Activated CD4-positive, alpha-beta T cell treated with anti-CD3 and anti-CD28 coated beads, Interleukin-2, amount 10 ng/mL, durations not matched to agents 24 days and 14 days (primary cell): ENCODE measurements at regions of chr2 and their contacts with region 1.

Region 1: GRCh38 chr2:63841254-63842022 is at the start of gene UGP2:
- DNase-seq: peak; percentile 96
- H3K4me3 Mint-ChIP-seq: peak within 1 kb of the TSS; percentile 96
- H3K27ac Mint-ChIP-seq: peak within 1 kb of the TSS; percentile 100
- H3K4me1 Mint-ChIP-seq: peaks cover 48% of the 10 kb centered on the region
- H3K27me3 Mint-ChIP-seq: peaks cover 3% of the 10 kb centered on the region
- total RNA-seq, gene UGP2: 66.3 and 66.5 TPM in 2 replicates

Region 2: GRCh38 chr2:63588385-63589147 is 252.9 kb before region 1 on chr2 and contains the starts of genes MDH1 and WDPCP:
- intact Hi-C with region 1: loop called (anchors 1 kb)
- DNase-seq: peak; percentile 97
- H3K4me3 Mint-ChIP-seq: peak within 1 kb of the TSS; percentile 98
- H3K27ac Mint-ChIP-seq: peak within 1 kb of the TSS; percentile 92
- H3K4me1 Mint-ChIP-seq: peaks cover 32% of the 10 kb centered on the region
- H3K27me3 Mint-ChIP-seq: no peaks in the 10 kb centered on the region
- total RNA-seq, gene MDH1: 195 and 208 TPM in 2 replicates
- total RNA-seq, gene WDPCP: 6.0 and 8.9 TPM in 2 replicates

Region 3: GRCh38 chr2:63819765-63820717 is 21.4 kb before region 1 on chr2:
- intact Hi-C with region 1: no loop called
- DNase-seq: no peak
- H3K4me3 Mint-ChIP-seq: no peak overlapping the region
- H3K27ac Mint-ChIP-seq: no peak overlapping the region
- H3K4me1 Mint-ChIP-seq: no peaks in the 10 kb centered on the region
- H3K27me3 Mint-ChIP-seq: peaks cover 22% of the 10 kb centered on the region

Region 4: DNA sequence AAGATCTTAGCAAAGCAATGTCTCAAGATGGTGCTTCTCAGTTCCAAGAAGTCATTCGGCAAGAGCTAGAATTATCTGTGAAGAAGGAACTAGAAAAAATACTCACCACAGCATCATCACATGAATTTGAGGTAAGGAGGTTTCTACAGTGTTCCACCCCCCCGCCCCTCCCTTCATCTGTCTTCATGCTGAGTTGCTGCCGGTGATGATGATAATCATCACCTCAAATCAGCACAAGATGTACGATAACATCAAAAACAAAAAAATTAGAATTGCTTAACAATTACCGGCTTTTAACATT is 14.8 kb after region 1 on chr2:
- intact Hi-C with region 1: loop called (anchors 1 kb)
- DNase-seq: peak; percentile 82
- H3K4me3 Mint-ChIP-seq: peak overlapping the region; percentile 75
- H3K27ac Mint-ChIP-seq: peak overlapping the region; percentile 92
- H3K4me1 Mint-ChIP-seq: peaks cover 56% of the 10 kb centered on the region
- H3K27me3 Mint-ChIP-seq: no peaks in the 10 kb centered on the region

Region 5: GRCh38 chr2:63888490-63889402 is 47.3 kb after region 1 on chr2:
- intact Hi-C with region 1: loop called (anchors 2 kb)
- DNase-seq: peak; percentile 82
- H3K4me3 Mint-ChIP-seq: no peak overlapping the region
- H3K27ac Mint-ChIP-seq: peak overlapping the region; percentile 31
- H3K4me1 Mint-ChIP-seq: peaks cover 7% of the 10 kb centered on the region
- H3K27me3 Mint-ChIP-seq: no peaks in the 10 kb centered on the region

Region 6: DNA sequence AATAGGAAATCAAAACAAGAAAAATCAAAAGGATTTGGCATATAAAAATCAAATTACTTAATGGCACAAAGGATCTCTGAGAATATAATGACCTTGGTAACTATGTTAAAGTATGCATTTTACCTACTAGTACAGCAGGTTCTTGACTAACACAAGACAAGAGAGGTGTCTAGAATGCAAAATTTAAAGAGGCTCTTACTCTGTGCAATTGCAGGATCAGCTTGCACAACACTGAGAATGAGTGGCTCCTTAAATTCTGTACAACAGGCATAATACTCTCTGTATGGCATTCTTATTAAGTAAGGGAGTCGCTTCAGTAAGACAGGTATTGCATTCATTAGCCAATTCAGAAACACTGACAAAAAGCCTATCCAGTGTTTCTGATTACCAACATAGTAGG is 72.9 kb after region 1 on chr2:
- intact Hi-C with region 1: no loop called
- DNase-seq: no peak
- H3K4me3 Mint-ChIP-seq: no peak overlapping the region
- H3K27ac Mint-ChIP-seq: no peak overlapping the region
- H3K4me1 Mint-ChIP-seq: no peaks in the 10 kb centered on the region
- H3K27me3 Mint-ChIP-seq: no peaks in the 10 kb centered on the region

Region 7: DNA sequence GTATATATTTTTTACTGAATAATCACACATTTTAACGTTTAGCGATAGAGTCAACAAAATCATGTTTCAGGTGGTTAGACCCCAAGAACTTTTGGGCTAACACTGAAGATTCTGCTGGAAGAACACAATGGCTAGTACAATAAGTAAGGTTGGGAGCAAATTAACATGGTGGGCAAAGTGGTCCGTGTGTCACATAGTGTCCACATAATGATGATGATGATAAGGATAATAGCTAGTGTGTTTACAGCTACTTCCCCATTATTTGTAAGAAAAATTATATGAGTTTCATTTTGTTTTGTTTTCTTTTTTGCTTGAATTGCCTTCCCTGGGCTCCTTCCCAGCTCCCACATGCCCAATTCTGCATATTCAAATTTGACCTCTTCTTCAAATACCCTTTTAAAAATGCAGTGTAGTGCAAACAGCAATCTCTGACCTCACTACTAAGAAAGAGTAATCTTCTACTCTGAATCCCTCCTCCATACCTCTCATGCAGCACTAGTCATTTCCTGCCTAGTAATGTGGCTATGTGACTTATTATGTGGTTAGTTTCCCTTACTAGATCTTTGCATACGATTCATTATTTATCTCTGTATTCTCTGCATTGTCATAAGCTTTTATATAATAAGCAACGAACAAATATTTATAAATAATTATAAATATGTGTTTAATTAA is 194.7 kb after region 1 on chr2:
- intact Hi-C with region 1: loop called (anchors 1 kb)
- DNase-seq: peak; percentile 82
- H3K4me3 Mint-ChIP-seq: peak overlapping the region; percentile 22
- H3K27ac Mint-ChIP-seq: peak overlapping the region; percentile 76
- H3K4me1 Mint-ChIP-seq: peaks cover 42% of the 10 kb centered on the region
- H3K27me3 Mint-ChIP-seq: no peaks in the 10 kb centered on the region

Region 8: GRCh38 chr2:64203858-64204632 is 362.6 kb after region 1 on chr2:
- intact Hi-C with region 1: loop called (anchors 5 kb)
- DNase-seq: peak; percentile 84
- H3K4me3 Mint-ChIP-seq: peak overlapping the region; percentile 75
- H3K27ac Mint-ChIP-seq: peak overlapping the region; percentile 75
- H3K4me1 Mint-ChIP-seq: peaks cover 71% of the 10 kb centered on the region
- H3K27me3 Mint-ChIP-seq: no peaks in the 10 kb centered on the region